Right lobe of liver (tissue), 6 donors: ENCODE measurements at regions of chr4 and their contacts with region 1.

Region 1: GRCh38 chr4:171759274-171759673 is 53.9 kb upstream of the GALNTL6 start:
- DNase-seq: no peak
- ATAC-seq: no peak
- H3K4me3 ChIP-seq: no peak overlapping the region
- H3K27ac ChIP-seq: no peak overlapping the region
- H3K4me1 ChIP-seq: no peaks in the 10 kb centered on the region
- H3K27me3 ChIP-seq: no peaks in the 10 kb centered on the region
- CTCF ChIP-seq: no peak
- POLR2A ChIP-seq: no peak

Region 2: GRCh38 chr4:171650543-171650942 is 108.7 kb before region 1 on chr4:
- intact Hi-C with region 1: loop called in 1 of 2 experiments (anchors 5 kb)
- DNase-seq: no peak
- ATAC-seq: peak in 1 of 4 donors; percentile 24
- H3K4me3 ChIP-seq: no peak overlapping the region
- H3K27ac ChIP-seq: no peak overlapping the region
- H3K4me1 ChIP-seq: no peaks in the 10 kb centered on the region
- H3K27me3 ChIP-seq: no peaks in the 10 kb centered on the region
- CTCF ChIP-seq: no peak
- POLR2A ChIP-seq: no peak

Region 3: DNA sequence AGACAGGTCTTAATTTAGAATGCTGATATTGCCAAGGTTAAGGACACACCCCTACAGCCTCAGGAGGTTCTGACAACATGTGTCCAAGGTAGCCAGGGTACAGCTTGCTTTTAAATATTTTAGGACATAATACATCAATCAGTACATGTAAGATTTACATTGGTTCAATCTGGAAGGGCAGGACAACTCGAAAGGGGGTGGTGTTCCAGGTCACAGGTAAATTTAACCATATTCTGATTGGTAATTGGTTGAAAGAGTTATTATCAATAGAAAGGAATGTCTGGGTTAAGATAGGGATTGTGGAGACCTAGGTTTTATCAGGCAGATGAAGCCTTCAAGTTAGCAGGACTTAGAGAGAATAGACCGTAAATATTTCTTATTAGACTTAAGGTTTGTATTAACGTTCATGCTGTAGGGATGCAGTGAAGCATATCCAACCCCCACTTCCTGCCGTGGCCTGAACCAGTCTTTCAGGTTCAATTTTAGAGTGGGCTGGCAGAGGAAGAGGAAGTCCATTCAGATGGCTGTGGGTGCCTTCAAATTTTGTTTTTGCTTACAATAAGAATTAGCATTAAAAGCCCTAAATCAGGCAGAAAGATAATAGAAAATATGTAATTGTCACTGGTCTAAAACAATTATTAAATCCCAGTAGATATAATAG is 82.6 kb before region 1 on chr4:
- intact Hi-C with region 1: no loop called
- DNase-seq: no peak
- ATAC-seq: no peak
- H3K4me3 ChIP-seq: no peak overlapping the region
- H3K27ac ChIP-seq: no peak overlapping the region
- H3K4me1 ChIP-seq: no peaks in the 10 kb centered on the region
- H3K27me3 ChIP-seq: no peaks in the 10 kb centered on the region
- CTCF ChIP-seq: no peak
- POLR2A ChIP-seq: no peak

Region 4: DNA sequence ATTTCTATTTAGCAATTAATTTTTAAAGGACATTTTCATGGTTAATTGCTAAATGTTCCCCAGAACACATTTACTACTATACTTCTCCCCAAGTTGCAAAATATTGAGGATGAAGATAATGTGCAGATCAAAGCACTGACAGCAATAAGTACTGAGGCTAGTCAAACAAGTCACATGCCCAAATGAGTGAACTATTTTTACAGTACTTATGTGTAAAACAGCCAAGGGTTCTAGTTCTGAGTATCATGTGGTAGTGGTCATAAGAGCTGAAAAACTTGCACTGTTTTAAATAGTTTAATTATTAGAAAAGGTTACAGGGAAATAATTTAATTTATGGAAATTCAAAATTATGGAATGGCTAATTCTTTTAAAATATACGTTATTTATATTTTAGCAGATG is 57.8 kb after region 1 on chr4:
- intact Hi-C with region 1: no loop called
- DNase-seq: no peak
- ATAC-seq: no peak
- H3K4me3 ChIP-seq: no peak overlapping the region
- H3K27ac ChIP-seq: no peak overlapping the region
- H3K4me1 ChIP-seq: peaks cover 0 to 7% (median 0%) of the 10 kb centered on the region in 4 donors
- H3K27me3 ChIP-seq: peaks cover 0 to 18% of the 10 kb centered on the region in 2 donors
- CTCF ChIP-seq: no peak
- POLR2A ChIP-seq: no peak